ENCODE measurements at regions of chr6 and their contacts with region 1.

Region 1: DNA sequence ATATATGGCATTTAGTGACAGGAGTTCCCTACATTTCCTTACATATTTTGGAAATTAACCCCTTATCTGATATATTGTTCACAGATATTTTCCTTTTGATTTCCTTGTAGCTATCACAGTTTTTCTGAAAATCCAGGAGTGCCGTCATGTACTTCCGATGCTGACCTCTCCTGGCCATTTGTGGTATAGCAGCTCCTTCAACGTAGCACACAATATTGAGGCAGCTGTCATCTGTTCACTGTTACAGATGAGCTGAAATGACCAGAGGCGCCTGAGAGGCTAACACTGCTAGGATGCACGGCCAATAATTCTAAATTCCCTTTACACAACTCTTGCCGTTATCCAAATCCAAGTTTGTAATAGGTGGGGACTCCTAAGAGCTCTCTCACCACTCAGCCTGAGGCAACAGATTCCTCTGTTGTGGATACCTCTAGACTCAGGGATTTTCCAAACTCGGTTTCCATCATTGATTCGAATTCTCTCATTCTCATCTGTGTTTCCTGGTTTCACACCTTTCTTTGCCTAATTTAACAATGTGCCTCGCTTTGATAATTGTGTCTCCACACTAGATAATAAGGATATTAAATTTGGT is 53.0 kb downstream of the MMUT start:
- DNase-seq: peak; percentile 28 to 86 (median 68)

Region 2: DNA sequence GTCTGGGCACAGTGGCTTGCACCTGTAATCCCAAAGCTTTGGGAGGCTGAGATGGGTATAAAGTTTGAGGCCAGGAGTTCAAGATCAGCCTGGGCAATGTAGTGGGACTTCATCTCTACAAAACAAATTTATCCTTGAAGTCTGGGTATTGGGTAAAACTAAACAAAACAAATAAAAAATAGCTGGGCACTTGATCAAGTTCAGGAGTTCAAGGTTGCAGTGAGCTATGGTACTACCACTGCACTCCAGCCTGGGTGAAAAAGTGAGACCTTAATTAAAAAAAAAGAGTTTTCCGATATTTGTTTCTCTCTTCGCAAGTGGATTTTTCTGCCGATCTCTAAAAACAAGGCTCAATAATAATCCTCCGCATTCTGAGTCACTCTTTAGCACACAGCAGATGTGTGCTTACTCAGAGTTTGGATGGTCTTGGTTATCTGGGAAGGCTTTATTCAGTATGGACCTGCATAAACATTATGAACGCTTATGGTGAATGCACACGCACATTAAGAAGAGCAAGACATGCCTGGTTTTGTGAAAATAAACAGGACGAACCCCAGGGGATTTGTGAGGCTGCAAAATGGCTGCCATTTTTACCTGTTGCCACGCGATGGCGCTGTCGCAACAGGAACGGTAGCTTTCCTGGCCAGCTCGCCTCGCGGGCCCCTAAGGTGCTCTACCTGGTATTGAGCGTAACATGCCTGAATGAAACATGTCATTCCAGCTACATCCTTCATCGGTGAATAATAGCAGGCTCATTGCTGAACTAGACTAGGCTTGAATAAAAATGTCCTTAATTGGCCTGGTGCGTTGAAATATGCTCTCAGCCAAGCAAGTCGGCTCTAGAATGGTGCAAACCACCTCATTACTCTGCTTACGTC is 1622.2 kb before region 1 on chr6:
- intact Hi-C with region 1: loop called (anchors 5 kb)
- DNase-seq: peak; percentile 16 to 93 (median 60)

Measured in posterior cingulate gyrus (tissue), 11 donors.